Caco-2 (cell line): ENCODE measurements at regions of chr4 and their contacts with region 1.

Region 1: DNA sequence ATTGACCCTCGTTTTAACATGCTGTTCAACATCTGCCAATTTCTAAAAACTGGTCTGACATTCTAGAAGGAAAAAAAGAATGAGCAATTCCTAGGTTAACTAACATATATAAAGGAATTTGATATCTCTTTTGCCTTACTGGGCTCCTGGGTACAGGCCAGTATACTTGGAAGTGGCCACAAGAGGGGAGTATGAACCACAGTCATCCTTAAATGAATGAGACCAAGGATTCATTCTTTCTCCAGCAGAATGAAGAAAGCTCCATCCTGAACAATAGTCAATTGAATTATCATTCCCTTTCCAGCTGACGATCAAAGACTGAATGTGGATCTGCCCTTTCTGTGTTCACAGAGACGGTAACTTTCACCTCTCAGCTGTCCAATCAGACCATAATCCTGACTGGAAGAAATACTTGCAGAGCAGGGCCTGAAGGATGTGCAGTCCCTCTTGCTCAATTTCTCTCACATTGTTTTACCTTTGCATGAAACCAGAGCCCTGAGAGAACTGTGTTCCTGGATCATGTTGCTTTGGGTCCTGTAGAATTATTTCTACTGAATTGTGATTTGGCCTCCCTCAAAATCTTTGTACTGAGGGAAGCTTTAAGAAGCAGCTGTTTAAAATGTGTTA is 14.8 kb upstream of the SPARCL1 start:
- DNase-seq: peak in 1 of 2 experiments; percentile 29
- H3K4me3 ChIP-seq: no peak overlapping the region
- H3K4me3 Mint-ChIP-seq: no peak overlapping the region
- H3K27ac Mint-ChIP-seq: no peak overlapping the region
- H3K4me1 ChIP-seq: no peaks in the 10 kb centered on the region
- H3K4me1 Mint-ChIP-seq: no peaks in the 10 kb centered on the region
- H3K27me3 ChIP-seq: no peaks in the 10 kb centered on the region
- H3K27me3 Mint-ChIP-seq: peaks cover 13% of the 10 kb centered on the region
- CTCF ChIP-seq: peak; percentile 39 to 55

Region 2: GRCh38 chr4:87644286-87644685 is 100.3 kb after region 1 on chr4:
- CTCF ChIA-PET with region 1: no interaction called
- POLR2A ChIA-PET with region 1: no interaction called
- intact Hi-C with region 1: loop called (anchors 10 kb)
- DNase-seq: no peak
- H3K4me3 ChIP-seq: no peak overlapping the region
- H3K4me3 Mint-ChIP-seq: no peak overlapping the region
- H3K27ac Mint-ChIP-seq: no peak overlapping the region
- H3K4me1 ChIP-seq: no peaks in the 10 kb centered on the region
- H3K4me1 Mint-ChIP-seq: no peaks in the 10 kb centered on the region
- H3K27me3 ChIP-seq: no peaks in the 10 kb centered on the region
- H3K27me3 Mint-ChIP-seq: peaks cover 1% of the 10 kb centered on the region
- CTCF ChIP-seq: no peak

Region 3: GRCh38 chr4:87838890-87839591 is 295.1 kb after region 1 on chr4:
- CTCF ChIA-PET with region 1: interaction called, 6 read pairs
- POLR2A ChIA-PET with region 1: no interaction called
- intact Hi-C with region 1: loop called (anchors 1 kb)
- DNase-seq: peak in 1 of 2 experiments; percentile 34
- H3K4me3 ChIP-seq: no peak overlapping the region
- H3K4me3 Mint-ChIP-seq: no peak overlapping the region
- H3K27ac Mint-ChIP-seq: no peak overlapping the region
- H3K4me1 ChIP-seq: no peaks in the 10 kb centered on the region
- H3K4me1 Mint-ChIP-seq: no peaks in the 10 kb centered on the region
- H3K27me3 ChIP-seq: no peaks in the 10 kb centered on the region
- H3K27me3 Mint-ChIP-seq: peaks cover 17% of the 10 kb centered on the region
- CTCF ChIP-seq: peak; percentile 38 to 60